ENCODE measurements at regions of chr12 and their contacts with region 1.

Region 1: DNA sequence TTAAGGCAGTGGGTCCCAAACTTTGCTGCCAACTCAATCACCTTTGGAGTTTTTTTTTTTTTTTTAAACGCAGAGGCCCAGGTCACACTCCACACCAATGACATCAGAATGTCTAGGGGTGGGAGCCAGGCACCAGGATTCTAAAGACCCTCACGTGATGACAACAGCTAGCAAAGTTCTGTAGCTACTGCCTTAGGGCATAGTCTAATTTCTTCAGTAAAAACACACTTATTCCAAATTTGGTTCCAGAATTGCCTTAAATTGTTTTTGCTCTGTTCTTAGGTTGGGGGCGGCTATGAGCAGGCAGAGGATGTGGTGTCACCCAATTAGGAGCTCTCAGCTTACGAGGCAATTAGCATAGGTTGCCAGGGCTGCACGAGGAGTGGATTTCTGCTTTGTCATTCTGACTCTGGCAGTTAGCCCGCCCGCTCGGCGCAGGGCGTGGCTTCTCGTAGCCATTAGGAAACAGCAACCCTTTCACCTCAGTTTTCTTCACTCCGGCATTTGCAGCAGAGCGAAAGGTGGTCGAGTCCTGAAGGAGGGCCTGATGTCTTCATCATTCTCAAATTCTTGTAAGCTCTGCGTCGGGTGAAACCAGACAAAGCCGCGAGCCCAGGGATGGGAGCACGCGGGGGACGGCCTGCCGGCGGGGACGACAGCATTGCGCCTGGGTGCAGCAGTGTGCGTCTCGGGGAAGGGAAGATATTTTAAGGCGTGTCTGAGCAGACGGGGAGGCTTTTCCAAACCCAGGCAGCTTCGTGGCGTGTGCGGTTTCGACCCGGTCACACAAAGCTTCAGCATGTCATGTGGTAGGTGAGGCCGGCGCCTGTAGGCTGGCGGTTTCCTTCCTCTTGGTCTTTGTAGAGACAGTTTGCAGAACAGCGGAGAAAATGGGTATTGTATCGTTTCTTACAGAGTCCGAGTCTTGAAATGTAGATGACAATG is 16.7 kb upstream of the EID3 start:
- DNase-seq: peak; percentile 77 to 94
- ATAC-seq: peak; percentile 88 to 96 (median 89)
- H3K4me3 ChIP-seq: peak overlapping the region; percentile 86
- H3K4me3 Mint-ChIP-seq: peak overlapping the region; percentile 98
- H3K27ac ChIP-seq: peak overlapping the region; percentile 88
- H3K27ac Mint-ChIP-seq: peak overlapping the region; percentile 97 to 99
- H3K4me1 ChIP-seq: peaks cover 32% of the 10 kb centered on the region
- H3K4me1 Mint-ChIP-seq: peaks cover 32 to 39% of the 10 kb centered on the region in 2 donors
- H3K27me3 ChIP-seq: no peaks in the 10 kb centered on the region
- H3K27me3 Mint-ChIP-seq: no peaks in the 10 kb centered on the region
- CTCF ChIP-seq: no peak

Region 2: GRCh38 chr12:104064031-104064822 is 222.6 kb before region 1 on chr12 and contains the start of gene HCFC2:
- intact Hi-C with region 1: loop called (anchors 5 kb)
- DNase-seq: peak; percentile 86 to 91
- ATAC-seq: peak; percentile 95 to 97 (median 97)
- H3K4me3 ChIP-seq: peak within 1 kb of the TSS; percentile 87
- H3K4me3 Mint-ChIP-seq: peak within 1 kb of the TSS; percentile 92
- H3K27ac ChIP-seq: peak within 1 kb of the TSS; percentile 66
- H3K27ac Mint-ChIP-seq: peak within 1 kb of the TSS; percentile 82 to 93
- H3K4me1 ChIP-seq: peaks cover 14% of the 10 kb centered on the region
- H3K4me1 Mint-ChIP-seq: peaks cover 13 to 22% of the 10 kb centered on the region in 2 donors
- H3K27me3 ChIP-seq: no peaks in the 10 kb centered on the region
- H3K27me3 Mint-ChIP-seq: peaks cover 8 to 9% of the 10 kb centered on the region in 2 donors
- CTCF ChIP-seq: no peak
- total RNA-seq, gene HCFC2: 20.3 to 24.4 (median 23.8) TPM

Region 3: DNA sequence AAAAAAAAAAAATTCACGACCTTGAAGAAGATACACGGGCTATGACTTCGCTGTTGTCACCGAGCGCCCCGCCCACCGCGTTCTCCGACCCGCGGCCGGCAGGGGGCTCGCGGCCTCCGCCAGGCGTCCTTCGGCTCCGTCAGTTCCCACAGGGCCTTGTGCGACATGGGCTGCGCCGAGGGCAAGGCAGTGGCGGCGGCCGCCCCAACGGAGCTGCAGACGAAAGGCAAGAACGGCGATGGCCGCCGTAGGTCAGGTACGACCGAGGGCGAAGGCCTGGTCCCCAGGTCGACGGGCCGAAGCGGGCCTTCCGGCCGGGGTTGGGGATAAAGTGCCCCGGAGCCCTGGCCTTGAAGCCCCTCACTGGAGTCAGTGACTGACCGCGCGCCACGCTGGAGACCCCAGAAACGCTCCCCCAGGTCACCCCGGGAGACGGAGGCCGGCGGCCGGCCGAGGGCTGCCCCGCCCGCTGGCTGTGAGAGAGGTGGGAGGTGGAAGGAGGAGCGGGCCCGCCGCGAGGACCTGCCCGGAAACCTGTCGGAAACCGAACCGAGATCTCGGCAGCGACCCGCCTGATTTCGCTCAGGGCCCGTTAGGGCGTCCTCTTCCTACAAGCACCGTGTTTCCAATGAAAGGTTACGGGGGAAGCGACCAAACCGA is 71.0 kb before region 1 on chr12 and contains the start of gene TXNRD1:
- intact Hi-C with region 1: loop called (anchors 5 kb)
- DNase-seq: peak; percentile 78 to 92
- ATAC-seq: peak; percentile 94 to 98 (median 98)
- H3K4me3 ChIP-seq: peak within 1 kb of the TSS; percentile 71
- H3K4me3 Mint-ChIP-seq: peak within 1 kb of the TSS; percentile 87
- H3K27ac ChIP-seq: peak within 1 kb of the TSS; percentile 37
- H3K27ac Mint-ChIP-seq: peak within 1 kb of the TSS in 1 of 2 donors; percentile 89
- H3K4me1 ChIP-seq: peaks cover 15% of the 10 kb centered on the region
- H3K4me1 Mint-ChIP-seq: peaks cover 10 to 20% of the 10 kb centered on the region in 2 donors
- H3K27me3 ChIP-seq: no peaks in the 10 kb centered on the region
- H3K27me3 Mint-ChIP-seq: peaks cover 0 to 5% of the 10 kb centered on the region in 2 donors
- CTCF ChIP-seq: peak; percentile 81
- total RNA-seq, gene TXNRD1: 46.9 to 59.7 (median 47.3) TPM

Region 4: GRCh38 chr12:104303538-104304151 is 16.8 kb after region 1 on chr12 and contains the start of gene EID3:
- intact Hi-C with region 1: loop called (anchors 1 kb)
- DNase-seq: peak; percentile 92
- ATAC-seq: peak; percentile 98 to 99 (median 98)
- H3K4me3 ChIP-seq: peak within 1 kb of the TSS; percentile 60
- H3K4me3 Mint-ChIP-seq: peak within 1 kb of the TSS; percentile 98
- H3K27ac ChIP-seq: peak within 1 kb of the TSS; percentile 73
- H3K27ac Mint-ChIP-seq: peak within 1 kb of the TSS; percentile 94 to 96
- H3K4me1 ChIP-seq: peaks cover 11% of the 10 kb centered on the region
- H3K4me1 Mint-ChIP-seq: peaks cover 45 to 50% of the 10 kb centered on the region in 2 donors
- H3K27me3 ChIP-seq: no peaks in the 10 kb centered on the region
- H3K27me3 Mint-ChIP-seq: no peaks in the 10 kb centered on the region
- CTCF ChIP-seq: no peak
- total RNA-seq, gene EID3: 10.4 to 13.0 (median 12.7) TPM

Measured in natural killer cell (primary cell).